Sciatic nerve (tissue), 2 donors: ENCODE measurements at regions of chr7 and their contacts with region 1.

Region 1: GRCh38 chr7:48734695-48735406 is 189.5 kb upstream of the CDC14C start:
- DNase-seq: no peak
- ATAC-seq: no peak

Region 2: DNA sequence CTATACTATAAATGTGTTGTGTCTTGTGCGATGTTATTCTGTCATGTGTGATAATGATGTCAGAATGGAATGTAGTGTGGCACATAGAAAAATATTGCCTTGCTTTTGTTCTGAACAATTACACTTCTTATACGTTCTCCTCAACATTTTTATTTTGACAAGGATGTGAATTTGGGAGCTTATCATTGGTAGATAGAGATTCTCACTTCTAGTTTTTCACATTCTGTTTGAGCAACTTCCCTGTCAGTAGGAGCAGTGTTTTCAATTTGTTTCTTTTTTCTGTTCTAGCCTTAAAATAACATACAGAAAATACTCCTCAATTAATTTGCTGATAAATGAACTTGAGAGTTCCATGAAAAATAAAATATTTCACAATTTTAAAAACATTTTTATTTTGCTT is 723.5 kb before region 1 on chr7:
- intact Hi-C with region 1: loop called (anchors 5 kb)
- DNase-seq: no peak
- ATAC-seq: no peak

Region 3: DNA sequence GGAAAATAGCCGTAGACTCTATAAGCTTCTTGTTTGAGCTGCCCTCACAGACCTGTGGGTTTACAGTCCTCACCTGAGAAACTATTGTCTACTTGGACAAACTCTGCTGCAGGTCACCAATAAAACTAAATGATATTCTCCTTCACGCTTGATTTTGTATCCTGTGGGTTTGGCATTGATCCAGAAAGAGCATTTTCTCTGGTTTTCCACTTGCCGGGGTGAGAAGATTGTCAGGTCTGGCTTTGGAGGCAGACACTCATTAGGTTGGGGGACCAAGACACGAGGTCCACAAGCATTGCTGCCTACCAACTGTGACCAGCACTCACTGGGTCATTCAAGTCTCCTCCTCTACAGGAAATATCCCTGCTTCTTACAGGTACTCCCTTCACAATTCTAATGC is 258.0 kb after region 1 on chr7:
- intact Hi-C with region 1: no loop called
- DNase-seq: no peak
- ATAC-seq: no peak